Activated CD8-positive, alpha-beta T cell treated with anti-CD3 and anti-CD28 coated beads for 36 hours (primary cell): ENCODE measurements at regions of chr1 and their contacts with region 1.

Region 1: GRCh38 chr1:91885716-91886506 is at the start of gene TGFBR3:
- DNase-seq: peak; percentile 76
- ATAC-seq: peak; percentile 80
- H3K4me3 Mint-ChIP-seq: peak within 1 kb of the TSS; percentile 89
- H3K27ac Mint-ChIP-seq: peak within 1 kb of the TSS; percentile 74
- H3K4me1 Mint-ChIP-seq: peaks cover 45% of the 10 kb centered on the region
- H3K27me3 Mint-ChIP-seq: peaks cover 16% of the 10 kb centered on the region
- CTCF ChIP-seq: no peak
- total RNA-seq, gene TGFBR3: 5.5 to 7.5 TPM

Region 2: GRCh38 chr1:91732291-91733107 is 153.4 kb before region 1 on chr1:
- CTCF ChIA-PET with region 1: interaction called, 3 read pairs
- POLR2A ChIA-PET with region 1: no interaction called
- intact Hi-C with region 1: loop called (anchors 5 kb)
- DNase-seq: peak; percentile 63
- ATAC-seq: peak; percentile 63
- H3K4me3 Mint-ChIP-seq: no peak overlapping the region
- H3K27ac Mint-ChIP-seq: peak overlapping the region; percentile 59
- H3K4me1 Mint-ChIP-seq: peaks cover 41% of the 10 kb centered on the region
- H3K27me3 Mint-ChIP-seq: no peaks in the 10 kb centered on the region
- CTCF ChIP-seq: no peak

Region 3: DNA sequence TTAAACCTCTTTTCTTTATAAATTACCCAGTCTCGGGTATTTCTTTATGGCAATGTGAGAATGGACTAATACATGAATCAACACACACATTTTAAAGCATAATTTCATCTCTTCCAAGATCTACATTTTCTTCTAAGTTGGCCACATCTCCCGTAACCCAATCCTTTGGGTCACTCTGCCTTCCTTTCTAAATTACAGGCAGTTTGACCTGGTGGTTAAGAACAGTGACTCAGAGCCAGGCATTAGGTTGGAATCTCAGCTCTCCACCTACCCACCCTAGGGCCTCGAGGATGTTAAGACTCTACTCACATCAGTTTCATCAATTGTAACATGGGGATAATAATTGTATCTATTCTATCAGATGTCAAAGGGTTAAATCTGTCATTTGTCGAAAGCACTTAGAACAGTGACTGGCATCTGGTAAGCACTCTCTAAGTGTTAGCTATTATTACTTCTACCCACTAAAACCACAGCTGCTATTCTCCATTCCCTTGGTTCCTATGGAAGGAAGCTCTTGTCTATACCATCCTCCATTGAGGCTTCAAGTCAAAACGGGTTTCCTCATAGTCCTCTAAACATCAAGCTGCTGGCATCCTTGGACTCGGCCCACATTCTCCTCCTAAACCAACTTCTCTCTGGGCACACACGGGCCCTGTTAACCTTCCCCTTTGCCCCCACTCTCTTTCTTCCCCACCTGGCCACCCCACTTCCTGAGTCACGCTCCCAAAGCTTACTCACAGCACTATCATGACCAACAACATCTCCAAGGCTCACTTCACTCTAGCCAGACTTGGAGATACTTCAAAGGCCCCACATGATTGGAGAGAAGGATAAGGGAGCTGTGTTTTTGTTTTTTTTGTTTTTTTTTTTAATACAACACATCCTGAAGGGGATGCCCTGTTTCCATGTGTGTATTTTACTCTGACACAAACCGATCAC is 116.9 kb before region 1 on chr1:
- CTCF ChIA-PET with region 1: no interaction called
- POLR2A ChIA-PET with region 1: no interaction called
- intact Hi-C with region 1: no loop called
- DNase-seq: no peak
- ATAC-seq: no peak
- H3K4me3 Mint-ChIP-seq: no peak overlapping the region
- H3K27ac Mint-ChIP-seq: no peak overlapping the region
- H3K4me1 Mint-ChIP-seq: peaks cover 12% of the 10 kb centered on the region
- H3K27me3 Mint-ChIP-seq: no peaks in the 10 kb centered on the region
- CTCF ChIP-seq: no peak

Region 4: DNA sequence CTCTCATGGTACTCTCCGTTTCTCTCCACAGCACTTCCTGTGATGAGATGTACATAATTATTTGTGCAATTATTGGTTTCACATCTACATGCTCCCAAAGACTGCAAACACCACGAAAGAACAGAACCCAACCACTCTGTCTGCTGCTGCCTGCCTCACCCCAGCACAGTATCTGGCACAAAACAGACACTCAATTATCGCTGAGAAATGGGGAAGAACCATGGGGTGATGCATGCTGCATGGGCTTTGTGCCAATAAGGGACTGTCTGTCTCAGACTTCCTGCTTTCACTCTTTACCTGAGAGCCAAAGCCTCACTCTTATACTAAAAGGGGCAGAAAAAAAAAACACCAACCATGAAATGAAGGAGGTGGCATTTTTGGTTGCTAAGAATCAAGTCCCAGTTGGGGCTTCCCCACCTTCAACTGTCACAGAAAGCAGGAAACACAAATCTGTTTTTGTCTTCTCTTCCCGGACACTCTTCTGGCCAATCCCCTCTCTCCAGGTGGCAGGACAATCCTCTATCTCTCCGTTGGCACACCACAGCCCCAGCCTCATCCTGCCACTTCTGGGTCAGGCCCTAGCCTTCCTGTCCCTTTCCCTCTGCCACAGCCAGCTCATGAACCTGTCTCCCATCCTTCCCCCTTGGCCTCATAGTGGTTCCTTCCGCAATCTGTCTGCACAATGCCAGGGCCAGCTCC is 81.9 kb before region 1 on chr1:
- CTCF ChIA-PET with region 1: interaction called, 7 read pairs
- POLR2A ChIA-PET with region 1: interaction called, 4 read pairs
- intact Hi-C with region 1: loop called (anchors 5 kb)
- DNase-seq: peak; percentile 87
- ATAC-seq: peak; percentile 72
- H3K4me3 Mint-ChIP-seq: peak overlapping the region; percentile 60
- H3K27ac Mint-ChIP-seq: peak overlapping the region; percentile 93
- H3K4me1 Mint-ChIP-seq: peaks cover 46% of the 10 kb centered on the region
- H3K27me3 Mint-ChIP-seq: peaks cover 6% of the 10 kb centered on the region
- CTCF ChIP-seq: no peak